ENCODE measurements at regions of chr10 and their contacts with region 1.

Region 1: DNA sequence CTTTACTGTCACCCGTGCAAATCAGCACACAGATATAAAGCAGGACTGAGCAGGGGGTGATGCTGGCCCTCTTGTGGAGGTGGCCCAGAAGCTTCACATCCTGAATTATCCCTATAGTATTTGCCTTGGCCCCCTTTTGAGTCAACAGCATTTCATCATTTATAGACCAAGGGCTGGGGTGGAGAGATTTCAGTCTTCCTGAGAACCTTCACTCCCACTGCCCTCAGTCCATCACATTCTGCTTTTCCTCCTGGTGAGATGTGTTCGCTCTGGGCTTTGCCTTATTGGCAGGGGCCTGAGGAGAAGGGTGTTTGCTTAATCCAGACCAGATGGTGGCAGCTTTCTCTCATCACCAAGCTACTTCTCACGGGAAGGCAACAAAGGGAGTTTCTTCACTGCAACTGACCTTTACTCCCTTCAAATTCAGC is 47.7 kb downstream of the NOC3L start:
- DNase-seq: no peak
- H3K4me3 ChIP-seq: no peak overlapping the region
- H3K27ac ChIP-seq: no peak overlapping the region
- H3K4me1 ChIP-seq: peaks cover 4% of the 10 kb centered on the region in 2 donors
- H3K27me3 ChIP-seq: no peaks in the 10 kb centered on the region
- CTCF ChIP-seq: no peak
- POLR2A ChIP-seq: no peak

Region 2: GRCh38 chr10:93790439-93790838 is 524.6 kb before region 1 on chr10:
- intact Hi-C with region 1: no loop called
- DNase-seq: no peak
- H3K4me3 ChIP-seq: no peak overlapping the region
- H3K27ac ChIP-seq: no peak overlapping the region
- H3K4me1 ChIP-seq: no peaks in the 10 kb centered on the region
- H3K27me3 ChIP-seq: no peaks in the 10 kb centered on the region
- CTCF ChIP-seq: no peak
- POLR2A ChIP-seq: no peak

Region 3: GRCh38 chr10:93926613-93927012 is 388.4 kb before region 1 on chr10:
- intact Hi-C with region 1: no loop called
- DNase-seq: no peak
- H3K4me3 ChIP-seq: no peak overlapping the region
- H3K27ac ChIP-seq: no peak overlapping the region
- H3K4me1 ChIP-seq: no peaks in the 10 kb centered on the region
- H3K27me3 ChIP-seq: no peaks in the 10 kb centered on the region
- CTCF ChIP-seq: no peak
- POLR2A ChIP-seq: no peak

Region 4: GRCh38 chr10:94076321-94076841 is 238.7 kb before region 1 on chr10:
- intact Hi-C with region 1: loop called (anchors 10 kb)
- DNase-seq: peak in 1 of 2 donors; percentile 16
- H3K4me3 ChIP-seq: no peak overlapping the region
- H3K27ac ChIP-seq: peak overlapping the region in 1 of 3 donors; percentile 45
- H3K4me1 ChIP-seq: peaks cover 7 to 17% of the 10 kb centered on the region in 2 donors
- H3K27me3 ChIP-seq: no peaks in the 10 kb centered on the region
- CTCF ChIP-seq: peak; percentile 21 to 74 (median 62)
- POLR2A ChIP-seq: no peak

Measured in thyroid gland (tissue), 4 donors.